A549 (cell line): ENCODE measurements at regions of chr9 and their contacts with region 1.

Region 1: GRCh38 chr9:36008774-36009300 is 27.9 kb upstream of the RECK start:
- DNase-seq: peak; percentile 79 to 85
- ATAC-seq: peak; percentile 90 to 99
- H3K4me3 ChIP-seq: no peak overlapping the region
- H3K27ac ChIP-seq: no peak overlapping the region
- H3K4me1 ChIP-seq: no peaks in the 10 kb centered on the region
- CTCF ChIP-seq: peak; percentile 100
- EP300 ChIP-seq: no peak
- POLR2A ChIP-seq: no peak
- RAD21 ChIP-seq: peak; percentile 85

Region 2: DNA sequence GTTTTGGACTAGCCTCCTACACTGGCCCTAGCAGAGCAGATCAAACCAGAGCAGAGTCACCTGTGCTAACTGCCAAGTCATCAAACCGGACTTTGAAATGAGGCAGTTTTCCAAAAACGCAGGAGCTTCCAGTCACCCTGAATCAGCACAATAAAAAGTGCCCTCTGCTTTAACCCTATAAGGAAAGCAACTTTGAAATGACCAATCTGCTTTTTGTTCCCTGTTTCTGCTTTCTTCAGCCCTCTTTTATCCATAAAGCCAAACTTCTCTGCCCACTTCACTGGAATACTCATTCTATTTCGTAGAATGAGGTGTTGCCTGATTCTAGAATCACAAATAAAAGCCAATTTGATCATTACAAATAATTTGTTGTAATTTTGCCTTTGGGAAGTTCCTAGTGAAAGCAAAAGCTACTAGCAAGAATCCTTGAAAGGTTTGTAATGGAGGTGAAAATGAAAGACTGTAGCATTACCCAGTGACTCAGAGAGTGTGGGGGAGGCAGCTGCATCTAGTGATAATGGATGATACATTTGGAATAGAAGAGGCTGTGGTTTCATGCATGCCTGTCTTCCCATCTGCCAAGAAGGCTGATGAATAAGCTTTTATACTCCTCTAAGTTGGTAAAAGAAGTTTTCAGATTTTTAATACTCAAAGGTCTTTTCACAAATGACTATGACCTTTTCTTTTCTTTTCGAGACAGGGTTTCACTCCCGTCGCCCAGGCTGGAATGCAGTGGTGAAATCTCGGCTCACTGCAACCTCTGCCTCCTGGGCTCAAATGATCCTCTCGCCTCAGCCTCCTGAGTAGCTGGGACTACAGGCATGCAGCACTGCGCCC is 84.7 kb before region 1 on chr9:
- CTCF ChIA-PET with region 1: interaction called, 10 read pairs
- POLR2A ChIA-PET with region 1: no interaction called
- DNase-seq: peak; percentile 61 to 92
- ATAC-seq: peak; percentile 92 to 93
- H3K4me3 ChIP-seq: no peak overlapping the region
- H3K27ac ChIP-seq: peak overlapping the region; percentile 78 to 90
- H3K4me1 ChIP-seq: peaks cover 24% of the 10 kb centered on the region
- CTCF ChIP-seq: no peak
- EP300 ChIP-seq: peak in 1 of 2 experiments; percentile 32; a peak in 1 of 5 replicates
- POLR2A ChIP-seq: no peak
- RAD21 ChIP-seq: no peak

Region 3: DNA sequence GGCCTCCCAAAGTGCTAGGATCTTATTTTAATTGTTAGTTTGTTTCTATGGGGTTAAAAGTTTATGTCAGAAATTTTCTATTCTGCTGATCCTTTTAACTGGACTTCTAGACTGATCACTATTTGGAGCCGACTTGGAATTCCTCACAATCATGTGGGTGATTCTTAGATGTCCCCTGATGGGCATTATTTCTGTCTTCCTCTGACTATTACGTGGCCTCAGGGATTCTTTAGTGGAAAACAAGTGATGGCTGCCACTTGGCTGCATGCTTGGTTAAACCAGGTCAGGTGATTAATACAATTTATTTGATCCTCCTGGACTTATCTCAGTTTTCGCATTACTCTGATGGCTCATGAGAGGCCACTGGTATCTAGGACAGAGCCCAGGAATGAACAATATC is 18.7 kb before region 1 on chr9:
- CTCF ChIA-PET with region 1: interaction called, 10 read pairs
- POLR2A ChIA-PET with region 1: no interaction called
- DNase-seq: no peak
- ATAC-seq: no peak
- H3K4me3 ChIP-seq: no peak overlapping the region
- H3K27ac ChIP-seq: no peak overlapping the region
- H3K4me1 ChIP-seq: no peaks in the 10 kb centered on the region
- CTCF ChIP-seq: no peak
- EP300 ChIP-seq: no peak
- POLR2A ChIP-seq: no peak
- RAD21 ChIP-seq: no peak

Region 4: GRCh38 chr9:36023260-36024048 is 14.6 kb after region 1 on chr9:
- CTCF ChIA-PET with region 1: interaction called, 210 read pairs
- POLR2A ChIA-PET with region 1: no interaction called
- DNase-seq: peak; percentile 60 to 74
- ATAC-seq: peak; percentile 86 to 97
- H3K4me3 ChIP-seq: no peak overlapping the region
- H3K27ac ChIP-seq: no peak overlapping the region
- H3K4me1 ChIP-seq: no peaks in the 10 kb centered on the region
- CTCF ChIP-seq: peak; percentile 93
- EP300 ChIP-seq: no peak
- POLR2A ChIP-seq: no peak
- RAD21 ChIP-seq: peak; percentile 82 to 86

Region 5: GRCh38 chr9:36102742-36103495 is 94.1 kb after region 1 on chr9:
- CTCF ChIA-PET with region 1: interaction called, 79 read pairs
- POLR2A ChIA-PET with region 1: interaction called, 3 read pairs
- DNase-seq: peak; percentile 74 to 86
- ATAC-seq: peak; percentile 90 to 91
- H3K4me3 ChIP-seq: no peak overlapping the region
- H3K27ac ChIP-seq: peak overlapping the region; percentile 26 to 77
- H3K4me1 ChIP-seq: peaks cover 26% of the 10 kb centered on the region
- CTCF ChIP-seq: peak; percentile 71
- EP300 ChIP-seq: no peak
- POLR2A ChIP-seq: no peak
- RAD21 ChIP-seq: peak; percentile 64 to 84; a peak in 4 of 5 replicates

Region 6: GRCh38 chr9:36136272-36136893 is 127.5 kb after region 1 on chr9 and contains the start of gene GLIPR2:
- CTCF ChIA-PET with region 1: interaction called, 12 read pairs
- POLR2A ChIA-PET with region 1: no interaction called
- DNase-seq: peak; percentile 49 to 77
- ATAC-seq: peak; percentile 87 to 94
- H3K4me3 ChIP-seq: peak within 1 kb of the TSS; percentile 78
- H3K27ac ChIP-seq: peak within 1 kb of the TSS; percentile 79 to 93
- H3K4me1 ChIP-seq: peaks cover 14% of the 10 kb centered on the region; the same call in 1 of the 3 replicates
- CTCF ChIP-seq: no peak; the same call in 2 of the 3 replicates
- EP300 ChIP-seq: no peak
- POLR2A ChIP-seq: peak; percentile 53
- RAD21 ChIP-seq: peak in 1 of 2 experiments; percentile 5; a peak in 1 of 5 replicates
- polyA plus RNA-seq, gene GLIPR2: 6.2 and 9.0 TPM in 2 replicates

Region 7: GRCh38 chr9:36258208-36258988 is 249.6 kb after region 1 on chr9 and contains the start of gene GNE:
- CTCF ChIA-PET with region 1: no interaction called
- POLR2A ChIA-PET with region 1: no interaction called
- DNase-seq: peak; percentile 83 to 96
- ATAC-seq: peak; percentile 92 to 93
- H3K4me3 ChIP-seq: peak within 1 kb of the TSS; percentile 89
- H3K27ac ChIP-seq: peak within 1 kb of the TSS; percentile 97
- H3K4me1 ChIP-seq: peaks cover 6% of the 10 kb centered on the region
- CTCF ChIP-seq: no peak
- EP300 ChIP-seq: no peak
- POLR2A ChIP-seq: peak; percentile 92
- RAD21 ChIP-seq: peak in 1 of 2 experiments; percentile 12; a peak in 1 of 5 replicates
- polyA plus RNA-seq, gene GNE: 32.9 and 39.5 TPM in 2 replicates